Endothelial cell of umbilical vein (primary cell): ENCODE measurements at regions of chr7 and their contacts with region 1.

Region 1: GRCh38 chr7:27921081-27921836 is 181.3 kb downstream of the TAX1BP1 start:
- DNase-seq: peak; percentile 94
- H3K4me3 ChIP-seq: no peak overlapping the region
- H3K27ac ChIP-seq: no peak overlapping the region
- H3K4me1 ChIP-seq: peaks cover 37% of the 10 kb centered on the region
- H3K27me3 ChIP-seq: no peaks in the 10 kb centered on the region
- CTCF ChIP-seq: peak; percentile 42 to 45
- POLR2A ChIP-seq: no peak

Region 2: DNA sequence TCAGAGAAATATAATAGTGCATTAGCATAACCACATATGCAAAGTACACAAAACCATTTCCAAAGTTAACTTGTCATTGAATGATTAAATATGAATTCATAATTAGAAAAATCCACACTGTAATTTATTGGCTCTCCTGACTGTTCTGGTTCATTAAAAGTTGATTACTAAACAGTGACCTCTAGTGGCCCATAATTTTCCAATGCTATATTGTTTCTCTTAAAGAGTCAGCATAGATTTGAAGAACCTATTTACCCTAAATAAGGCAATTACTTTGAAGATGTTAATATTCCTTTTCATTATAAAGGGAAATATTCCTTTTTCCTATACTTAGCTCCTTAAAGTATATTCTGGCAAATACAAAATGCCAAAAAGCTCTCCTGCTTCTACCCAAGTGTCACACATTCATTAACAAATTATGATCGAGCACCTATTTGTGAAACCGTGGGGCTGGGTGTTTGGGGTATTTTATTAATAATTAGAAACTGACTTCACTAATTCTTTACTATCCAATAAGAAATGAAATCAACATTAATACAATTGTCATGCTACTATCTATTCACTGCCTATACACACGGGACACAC is 344.8 kb before region 1 on chr7:
- CTCF ChIA-PET with region 1: interaction called, 4 read pairs
- POLR2A ChIA-PET with region 1: no interaction called
- dilution Hi-C with region 1: no loop called
- intact Hi-C with region 1: loop called (anchors 2 kb)
- DNase-seq: peak; percentile 70
- H3K4me3 ChIP-seq: no peak overlapping the region
- H3K27ac ChIP-seq: no peak overlapping the region
- H3K4me1 ChIP-seq: no peaks in the 10 kb centered on the region
- H3K27me3 ChIP-seq: no peaks in the 10 kb centered on the region
- CTCF ChIP-seq: peak; percentile 22 to 26
- POLR2A ChIP-seq: no peak

Region 3: GRCh38 chr7:27689591-27690164 is 231.6 kb before region 1 on chr7:
- CTCF ChIA-PET with region 1: interaction called, 3 read pairs
- POLR2A ChIA-PET with region 1: no interaction called
- dilution Hi-C with region 1: no loop called
- intact Hi-C with region 1: loop called (anchors 1 kb)
- DNase-seq: peak; percentile 69
- H3K4me3 ChIP-seq: no peak overlapping the region
- H3K27ac ChIP-seq: no peak overlapping the region
- H3K4me1 ChIP-seq: peaks cover 10% of the 10 kb centered on the region
- H3K27me3 ChIP-seq: no peaks in the 10 kb centered on the region
- CTCF ChIP-seq: peak; percentile 42 to 72
- POLR2A ChIP-seq: no peak

Region 4: GRCh38 chr7:27784393-27785053 is 136.7 kb before region 1 on chr7:
- CTCF ChIA-PET with region 1: interaction called, 6 read pairs
- POLR2A ChIA-PET with region 1: no interaction called
- dilution Hi-C with region 1: no loop called
- intact Hi-C with region 1: loop called (anchors 2 kb)
- DNase-seq: peak; percentile 85
- H3K4me3 ChIP-seq: no peak overlapping the region
- H3K27ac ChIP-seq: no peak overlapping the region
- H3K4me1 ChIP-seq: peaks cover 11% of the 10 kb centered on the region
- H3K27me3 ChIP-seq: no peaks in the 10 kb centered on the region
- CTCF ChIP-seq: peak; percentile 48 to 52
- POLR2A ChIP-seq: no peak

Region 5: DNA sequence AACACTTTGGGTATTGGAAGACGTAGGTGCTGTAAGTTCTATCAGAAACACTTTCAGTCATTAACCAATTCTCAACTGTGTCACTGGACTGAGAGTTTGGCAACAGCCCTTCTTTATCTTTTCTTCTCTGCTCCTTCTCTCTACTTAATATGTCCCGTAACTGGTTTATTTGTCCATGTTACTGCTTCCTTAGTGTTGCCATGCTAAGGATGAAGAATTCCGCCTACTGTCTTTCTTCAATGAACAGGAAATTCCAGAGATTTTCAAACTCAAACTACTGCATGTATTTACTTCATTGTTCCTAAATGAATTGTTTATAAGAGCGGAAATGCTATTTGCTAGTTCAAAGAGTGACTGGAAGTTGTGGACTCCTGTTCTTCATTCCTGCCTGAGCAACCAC is 37.6 kb before region 1 on chr7:
- CTCF ChIA-PET with region 1: no interaction called
- POLR2A ChIA-PET with region 1: no interaction called
- dilution Hi-C with region 1: no loop called
- intact Hi-C with region 1: loop called (anchors 1 kb)
- DNase-seq: peak; percentile 81
- H3K4me3 ChIP-seq: peak overlapping the region in 1 of 3 experiments; percentile 0
- H3K27ac ChIP-seq: peak overlapping the region; percentile 85
- H3K4me1 ChIP-seq: peaks cover 31% of the 10 kb centered on the region
- H3K27me3 ChIP-seq: no peaks in the 10 kb centered on the region
- CTCF ChIP-seq: no peak
- POLR2A ChIP-seq: peak; percentile 40

Region 6: DNA sequence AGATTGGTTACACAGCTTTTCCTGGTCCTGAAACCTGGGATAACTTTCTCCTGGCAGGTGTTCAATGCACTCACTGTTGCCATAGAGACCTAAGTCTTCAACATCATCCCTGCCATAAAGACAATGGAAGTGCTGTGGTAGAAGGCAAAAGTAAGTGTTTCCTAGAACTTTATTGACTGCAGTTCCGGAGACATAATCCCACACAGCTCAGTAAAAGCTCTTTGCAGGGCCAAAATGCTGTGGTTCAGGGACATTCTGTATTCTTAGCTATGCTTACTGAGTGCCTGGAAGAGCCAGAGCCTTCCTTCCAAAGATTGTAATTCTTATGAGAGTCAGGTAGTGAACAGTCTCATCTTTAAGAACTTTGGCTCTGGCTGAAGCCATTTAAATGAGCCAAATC is 1890.3 kb after region 1 on chr7:
- CTCF ChIA-PET with region 1: no interaction called
- POLR2A ChIA-PET with region 1: no interaction called
- dilution Hi-C with region 1: no loop called
- intact Hi-C with region 1: no loop called
- DNase-seq: no peak
- H3K4me3 ChIP-seq: no peak overlapping the region
- H3K27ac ChIP-seq: no peak overlapping the region
- H3K4me1 ChIP-seq: peaks cover 3% of the 10 kb centered on the region
- H3K27me3 ChIP-seq: peaks cover 38 to 46% of the 10 kb centered on the region in 2 experiments
- CTCF ChIP-seq: no peak
- POLR2A ChIP-seq: no peak